ENCODE measurements at regions of chr11 and their contacts with region 1.

Region 1: DNA sequence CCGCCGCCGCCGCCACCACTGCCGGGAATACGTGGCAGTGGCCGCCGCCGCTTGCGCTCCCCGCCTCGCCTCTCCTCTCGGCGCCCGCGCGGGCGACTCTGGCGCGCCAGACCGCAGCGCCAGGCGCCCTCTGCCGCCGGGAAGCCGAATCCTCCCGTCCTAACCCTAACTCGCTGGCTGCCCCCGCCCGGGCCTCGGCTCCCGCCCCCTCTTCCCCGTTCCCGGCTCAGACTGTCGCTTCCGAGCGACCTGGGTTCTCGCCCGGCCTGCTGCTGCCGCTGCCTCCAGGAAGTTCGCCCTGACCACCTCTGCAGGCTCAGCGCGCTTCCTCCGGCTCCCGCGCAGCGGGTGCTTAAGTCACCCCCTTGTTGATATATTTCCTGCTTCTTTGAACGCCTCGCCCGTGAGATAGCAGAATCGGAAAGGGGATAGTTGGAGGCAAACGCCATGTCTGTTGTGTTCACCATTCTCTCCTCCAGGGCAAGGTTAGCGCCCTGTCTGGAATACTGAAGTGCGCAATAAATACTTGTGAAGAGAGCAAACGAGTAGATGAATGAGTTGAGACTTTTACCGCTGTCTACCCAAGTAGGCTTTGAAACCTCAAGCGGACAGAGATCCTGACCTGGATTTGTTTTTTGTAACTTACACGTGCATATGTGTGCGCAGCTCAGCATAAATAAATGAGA is at the start of gene SMCO4:
- DNase-seq: peak; percentile 62
- ATAC-seq: peak; percentile 89
- H3K4me3 ChIP-seq: peak within 1 kb of the TSS; percentile 77 to 83 (median 79)
- H3K27ac ChIP-seq: peak within 1 kb of the TSS; percentile 67
- H3K4me1 ChIP-seq: peaks cover 44% of the 10 kb centered on the region
- H3K27me3 ChIP-seq: peaks cover 0 to 7% of the 10 kb centered on the region in 2 experiments; a peak in 1 of 5 replicates
- CTCF ChIP-seq: peak; percentile 84
- EP300 ChIP-seq: peak in 1 of 2 experiments; percentile 19; a peak in 1 of 4 replicates
- POLR2A ChIP-seq: no peak; a peak in 1 of 4 replicates
- RAD21 ChIP-seq: peak; percentile 99
- total RNA-seq, gene SMCO4: 26.8 and 28.5 TPM in 2 replicates

Region 2: DNA sequence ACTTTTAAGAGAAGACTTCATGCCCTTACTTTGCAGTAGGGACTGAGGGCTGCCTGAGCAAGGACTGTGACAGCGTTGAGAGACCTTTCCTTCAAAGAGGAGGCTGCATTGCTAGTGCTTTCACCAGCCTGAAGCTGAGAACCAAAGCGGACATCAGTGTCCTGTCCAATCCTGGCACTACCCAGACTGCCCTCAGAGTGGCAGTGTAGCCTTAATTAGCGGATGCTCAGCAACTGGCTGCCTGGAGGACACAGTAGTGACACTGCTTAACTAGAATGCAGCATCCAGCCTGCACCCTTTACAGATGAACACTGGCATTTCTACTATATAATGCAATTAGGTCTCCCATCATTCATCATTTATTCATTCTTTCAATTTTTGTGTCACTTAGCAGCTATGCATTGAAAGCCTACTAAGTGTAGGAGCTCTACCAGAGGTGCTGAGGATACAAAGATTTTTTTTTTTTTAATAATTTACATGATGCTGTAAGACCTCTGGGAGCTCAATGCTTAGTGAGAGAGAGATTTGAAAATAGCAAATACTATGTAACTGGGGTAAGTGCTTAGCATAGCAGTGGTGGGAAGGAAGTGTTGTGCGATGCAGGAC is 308.7 kb before region 1 on chr11:
- CTCF ChIA-PET with region 1: interaction called, 7 read pairs
- POLR2A ChIA-PET with region 1: interaction called, 4 read pairs
- in situ Hi-C with region 1: loop called (anchors 5 kb)
- intact Hi-C with region 1: loop called (anchors 1 kb)
- DNase-seq: peak; percentile 61
- ATAC-seq: peak; percentile 99
- H3K4me3 ChIP-seq: no peak overlapping the region
- H3K27ac ChIP-seq: no peak overlapping the region
- H3K4me1 ChIP-seq: no peaks in the 10 kb centered on the region
- H3K27me3 ChIP-seq: no peaks in the 10 kb centered on the region
- CTCF ChIP-seq: peak; percentile 95
- EP300 ChIP-seq: no peak
- POLR2A ChIP-seq: no peak
- RAD21 ChIP-seq: peak; percentile 88

Region 3: GRCh38 chr11:93350835-93351234 is 192.6 kb before region 1 on chr11:
- CTCF ChIA-PET with region 1: no interaction called
- POLR2A ChIA-PET with region 1: no interaction called
- in situ Hi-C with region 1: no loop called
- intact Hi-C with region 1: loop called (anchors 1 kb)
- DNase-seq: no peak
- ATAC-seq: no peak
- H3K4me3 ChIP-seq: no peak overlapping the region
- H3K27ac ChIP-seq: no peak overlapping the region
- H3K4me1 ChIP-seq: no peaks in the 10 kb centered on the region
- H3K27me3 ChIP-seq: no peaks in the 10 kb centered on the region
- CTCF ChIP-seq: no peak
- EP300 ChIP-seq: no peak
- POLR2A ChIP-seq: no peak
- RAD21 ChIP-seq: no peak

Region 4: DNA sequence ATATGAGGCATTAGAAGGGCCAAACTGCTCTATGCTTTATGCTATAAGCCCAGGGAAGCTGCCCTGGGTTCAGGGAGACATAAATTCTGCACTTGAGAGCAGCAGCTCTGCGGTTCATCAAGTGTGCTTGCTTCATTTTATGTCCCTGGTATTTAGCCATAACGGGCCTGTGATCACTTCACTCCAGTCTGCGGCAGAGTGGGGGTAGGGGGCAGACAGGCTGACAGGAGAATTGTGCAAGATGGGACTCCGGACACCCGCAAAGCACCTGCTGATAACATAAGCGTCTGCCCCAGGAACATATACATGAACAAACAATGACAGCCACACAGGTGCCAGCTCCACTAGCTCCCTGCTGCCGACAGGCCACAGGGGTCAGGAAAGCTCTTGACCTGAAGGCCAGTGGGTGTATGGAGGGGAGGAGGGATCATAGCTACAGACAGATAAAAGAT is 56.4 kb before region 1 on chr11:
- CTCF ChIA-PET with region 1: no interaction called
- POLR2A ChIA-PET with region 1: interaction called, 25 read pairs
- in situ Hi-C with region 1: no loop called
- intact Hi-C with region 1: loop called (anchors 1 kb)
- DNase-seq: peak; percentile 97
- ATAC-seq: peak; percentile 99
- H3K4me3 ChIP-seq: peak overlapping the region in 1 of 3 experiments; percentile 15; a peak in 1 of 6 replicates
- H3K27ac ChIP-seq: peak overlapping the region; percentile 25
- H3K4me1 ChIP-seq: peaks cover 65% of the 10 kb centered on the region
- H3K27me3 ChIP-seq: no peaks in the 10 kb centered on the region
- CTCF ChIP-seq: peak; percentile 27; the same call in 1 of the 2 replicates
- EP300 ChIP-seq: peak; percentile 90 to 95; a peak in 3 of 4 replicates
- POLR2A ChIP-seq: no peak
- RAD21 ChIP-seq: peak; percentile 62; the same call in 1 of the 2 replicates

Region 5: DNA sequence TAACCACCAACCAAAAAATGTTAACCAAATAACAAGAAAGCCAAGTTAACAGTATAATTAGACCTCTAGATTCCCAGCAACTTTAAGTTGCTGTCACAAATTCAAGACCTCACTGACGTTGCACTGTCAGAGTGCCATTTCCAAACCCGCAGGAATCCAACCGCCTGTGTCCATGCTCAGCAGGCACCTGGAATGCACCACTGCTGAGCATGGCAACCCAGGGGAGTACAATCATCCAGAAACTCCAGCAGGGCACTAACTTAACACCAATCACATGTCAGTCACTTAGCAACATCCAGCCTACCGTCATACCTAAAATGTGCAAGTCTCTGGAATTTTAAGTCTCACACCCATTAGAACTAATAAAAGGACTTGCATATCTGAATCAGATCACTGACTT is 49.1 kb before region 1 on chr11:
- CTCF ChIA-PET with region 1: no interaction called
- POLR2A ChIA-PET with region 1: interaction called, 25 read pairs
- in situ Hi-C with region 1: no loop called
- intact Hi-C with region 1: no loop called
- DNase-seq: no peak
- ATAC-seq: no peak
- H3K4me3 ChIP-seq: no peak overlapping the region
- H3K27ac ChIP-seq: no peak overlapping the region
- H3K4me1 ChIP-seq: peaks cover 58% of the 10 kb centered on the region
- H3K27me3 ChIP-seq: no peaks in the 10 kb centered on the region
- CTCF ChIP-seq: no peak
- EP300 ChIP-seq: no peak
- POLR2A ChIP-seq: no peak
- RAD21 ChIP-seq: no peak

Region 6: GRCh38 chr11:93504110-93505095 is 39.0 kb before region 1 on chr11:
- CTCF ChIA-PET with region 1: no interaction called
- POLR2A ChIA-PET with region 1: no interaction called
- in situ Hi-C with region 1: no loop called
- intact Hi-C with region 1: no loop called
- DNase-seq: no peak
- ATAC-seq: no peak
- H3K4me3 ChIP-seq: no peak overlapping the region
- H3K27ac ChIP-seq: no peak overlapping the region
- H3K4me1 ChIP-seq: peaks cover 22% of the 10 kb centered on the region
- H3K27me3 ChIP-seq: no peaks in the 10 kb centered on the region
- CTCF ChIP-seq: no peak
- EP300 ChIP-seq: no peak
- POLR2A ChIP-seq: no peak
- RAD21 ChIP-seq: no peak

Region 7: DNA sequence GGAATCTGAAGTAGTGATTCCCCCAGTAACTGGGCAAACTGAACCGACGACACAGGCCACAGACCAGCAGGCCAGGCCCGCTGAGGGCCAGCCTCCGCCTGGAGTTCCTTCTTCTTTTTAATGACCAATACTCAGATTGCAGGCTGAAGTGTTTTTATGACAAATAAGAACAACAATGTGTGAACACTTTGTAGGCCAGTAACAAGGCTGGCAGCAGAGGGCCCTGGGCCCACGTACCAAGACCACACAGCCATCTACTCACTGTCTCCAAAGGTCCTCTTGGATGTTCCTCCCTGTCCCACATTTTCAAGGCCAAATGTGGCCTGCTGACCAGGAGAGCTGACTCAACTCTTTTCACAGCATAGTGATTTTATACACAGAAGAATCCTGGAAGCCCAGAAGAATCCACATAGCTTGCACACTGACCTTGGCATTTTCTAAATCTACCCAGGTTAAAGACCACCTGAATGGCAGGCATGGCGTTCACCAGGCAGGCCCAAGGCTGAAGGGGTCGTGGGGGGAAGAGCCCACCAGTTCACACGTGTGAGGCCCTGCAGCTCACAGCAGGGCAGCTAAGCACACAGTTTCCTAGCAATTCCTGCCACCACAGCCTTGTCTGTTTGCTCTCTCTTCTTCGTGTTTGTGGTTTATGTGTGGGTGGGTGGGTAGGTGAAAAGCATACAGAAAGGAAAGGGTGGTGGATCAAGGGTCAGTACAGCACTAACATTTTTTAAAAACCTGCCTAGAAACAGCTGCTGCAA is 13.5 kb before region 1 on chr11:
- CTCF ChIA-PET with region 1: interaction called, 3 read pairs
- POLR2A ChIA-PET with region 1: interaction called, 39 read pairs
- in situ Hi-C with region 1: no loop called
- intact Hi-C with region 1: loop called (anchors 1 kb)
- DNase-seq: peak; percentile 74
- ATAC-seq: peak; percentile 84
- H3K4me3 ChIP-seq: peak overlapping the region; percentile 12 to 55 (median 40); a peak in 5 of 6 replicates
- H3K27ac ChIP-seq: peak overlapping the region; percentile 75
- H3K4me1 ChIP-seq: peaks cover 69% of the 10 kb centered on the region
- H3K27me3 ChIP-seq: no peaks in the 10 kb centered on the region
- CTCF ChIP-seq: no peak
- EP300 ChIP-seq: peak; percentile 55 to 59; a peak in 2 of 4 replicates
- POLR2A ChIP-seq: 0 out of 4 replicates have a peak, but pooled peaks of 1 of the 2 experiments have one; percentile 31
- RAD21 ChIP-seq: no peak

Region 8: GRCh38 chr11:93608364-93608763 is 64.9 kb after region 1 on chr11:
- CTCF ChIA-PET with region 1: no interaction called
- POLR2A ChIA-PET with region 1: no interaction called
- in situ Hi-C with region 1: no loop called
- intact Hi-C with region 1: no loop called
- DNase-seq: no peak
- ATAC-seq: no peak
- H3K4me3 ChIP-seq: no peak overlapping the region
- H3K27ac ChIP-seq: no peak overlapping the region
- H3K4me1 ChIP-seq: no peaks in the 10 kb centered on the region
- H3K27me3 ChIP-seq: 0 out of 5 replicates have a peak, but pooled peaks cover 0 to 1% of the 10 kb centered on the region in 2 experiments
- CTCF ChIP-seq: no peak
- EP300 ChIP-seq: no peak
- POLR2A ChIP-seq: no peak
- RAD21 ChIP-seq: no peak

Region 9: GRCh38 chr11:93652161-93652597 is 108.7 kb after region 1 on chr11:
- CTCF ChIA-PET with region 1: no interaction called
- POLR2A ChIA-PET with region 1: no interaction called
- in situ Hi-C with region 1: no loop called
- intact Hi-C with region 1: loop called (anchors 2 kb)
- DNase-seq: peak; percentile 17
- ATAC-seq: peak; percentile 40
- H3K4me3 ChIP-seq: no peak overlapping the region
- H3K27ac ChIP-seq: no peak overlapping the region
- H3K4me1 ChIP-seq: no peaks in the 10 kb centered on the region
- H3K27me3 ChIP-seq: peaks cover 0 to 3% of the 10 kb centered on the region in 2 experiments; a peak in 1 of 5 replicates
- CTCF ChIP-seq: peak; percentile 64
- EP300 ChIP-seq: no peak
- POLR2A ChIP-seq: no peak
- RAD21 ChIP-seq: no peak